Mammary epithelial cell (primary cell): ENCODE measurements at regions of chr2 and their contacts with region 1.

Region 1: GRCh38 chr2:181916726-181917718 is 25.5 kb downstream of the ITPRID2 start:
- DNase-seq: no peak
- H3K4me3 ChIP-seq: no peak overlapping the region
- H3K27ac ChIP-seq: no peak overlapping the region
- H3K4me1 ChIP-seq: no peaks in the 10 kb centered on the region
- H3K27me3 ChIP-seq: no peaks in the 10 kb centered on the region
- CTCF ChIP-seq: no peak

Region 2: GRCh38 chr2:183267148-183267827 is 1350.3 kb after region 1 on chr2:
- CTCF ChIA-PET with region 1: interaction called, 12 read pairs
- dilution Hi-C with region 1: no loop called
- in situ Hi-C with region 1: no loop called
- intact Hi-C with region 1: no loop called
- DNase-seq: no peak
- H3K4me3 ChIP-seq: no peak overlapping the region
- H3K27ac ChIP-seq: no peak overlapping the region
- H3K4me1 ChIP-seq: peaks cover 4% of the 10 kb centered on the region
- H3K27me3 ChIP-seq: no peaks in the 10 kb centered on the region
- CTCF ChIP-seq: no peak